ENCODE measurements at regions of chrX and their contacts with region 1.

Region 1: GRCh38 chrX:37926700-37927099 is 79.3 kb upstream of the DYNLT3 start:
- DNase-seq: peak in 1 of 2 donors; percentile 37
- ATAC-seq: peak in 2 of 3 donors; percentile 36 to 48
- H3K4me3 ChIP-seq: no peak overlapping the region
- H3K4me3 Mint-ChIP-seq: no peak overlapping the region
- H3K27ac ChIP-seq: no peak overlapping the region
- H3K27ac Mint-ChIP-seq: no peak overlapping the region
- H3K4me1 ChIP-seq: no peaks in the 10 kb centered on the region
- H3K4me1 Mint-ChIP-seq: no peaks in the 10 kb centered on the region
- H3K27me3 ChIP-seq: no peaks in the 10 kb centered on the region
- H3K27me3 Mint-ChIP-seq: peaks cover 0 to 21% of the 10 kb centered on the region in 2 donors
- CTCF ChIP-seq: peak; percentile 22

Region 2: DNA sequence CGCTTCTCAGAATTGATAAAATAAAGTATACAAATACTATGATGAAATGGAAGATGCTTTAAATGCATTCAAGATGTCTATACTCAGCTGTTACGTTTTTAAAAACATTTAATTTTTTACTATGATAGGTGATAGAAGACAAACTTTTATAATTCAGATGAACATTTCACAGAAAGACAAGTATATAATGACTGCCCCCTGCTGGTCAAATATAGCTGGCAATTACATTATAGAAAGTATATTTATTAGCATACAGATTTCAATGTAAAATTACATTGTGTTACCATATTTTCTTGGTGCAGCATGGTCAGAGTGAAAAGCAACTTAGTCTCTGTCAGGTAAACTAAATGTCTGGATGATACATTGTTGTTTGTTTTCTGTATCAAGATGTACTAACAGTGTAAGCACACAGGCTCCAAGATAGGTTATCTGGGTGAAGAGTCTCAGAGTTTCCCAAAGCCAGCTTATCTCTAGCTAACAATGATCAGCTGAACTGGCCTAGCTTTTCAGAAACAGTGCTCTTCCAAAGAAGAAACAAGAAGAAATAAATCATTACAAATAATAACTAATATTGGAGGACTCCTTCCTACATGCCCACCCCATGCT is 239.9 kb after region 1 on chrX:
- intact Hi-C with region 1: loop called (anchors 2 kb)
- DNase-seq: peak in 1 of 2 donors; percentile 46
- ATAC-seq: no peak
- H3K4me3 ChIP-seq: no peak overlapping the region
- H3K4me3 Mint-ChIP-seq: no peak overlapping the region
- H3K27ac ChIP-seq: no peak overlapping the region
- H3K27ac Mint-ChIP-seq: no peak overlapping the region
- H3K4me1 ChIP-seq: no peaks in the 10 kb centered on the region
- H3K4me1 Mint-ChIP-seq: no peaks in the 10 kb centered on the region
- H3K27me3 ChIP-seq: no peaks in the 10 kb centered on the region
- H3K27me3 Mint-ChIP-seq: peaks cover 3 to 7% of the 10 kb centered on the region in 2 donors
- CTCF ChIP-seq: peak; percentile 47

Measured in natural killer cell (primary cell).